ENCODE measurements at regions of chr2 and their contacts with region 1.

Region 1: GRCh38 chr2:74482801-74483674 is at the starts of genes CCDC142 and TTC31:
- DNase-seq: peak; percentile 96
- H3K4me3 Mint-ChIP-seq: peak within 1 kb of the TSS; percentile 100
- H3K27ac Mint-ChIP-seq: peak within 1 kb of the TSS; percentile 99
- H3K4me1 Mint-ChIP-seq: peaks cover 35% of the 10 kb centered on the region
- H3K27me3 Mint-ChIP-seq: no peaks in the 10 kb centered on the region
- total RNA-seq, gene CCDC142: 10.1 to 10.8 TPM
- total RNA-seq, gene TTC31: 27.3 to 29.1 TPM

Region 2: GRCh38 chr2:74334931-74335333 is 148.1 kb before region 1 on chr2:
- CTCF ChIA-PET with region 1: no interaction called
- POLR2A ChIA-PET with region 1: no interaction called
- intact Hi-C with region 1: no loop called
- DNase-seq: peak; percentile 81
- H3K4me3 Mint-ChIP-seq: no peak overlapping the region
- H3K27ac Mint-ChIP-seq: no peak overlapping the region
- H3K4me1 Mint-ChIP-seq: peaks cover 5% of the 10 kb centered on the region
- H3K27me3 Mint-ChIP-seq: no peaks in the 10 kb centered on the region

Region 3: DNA sequence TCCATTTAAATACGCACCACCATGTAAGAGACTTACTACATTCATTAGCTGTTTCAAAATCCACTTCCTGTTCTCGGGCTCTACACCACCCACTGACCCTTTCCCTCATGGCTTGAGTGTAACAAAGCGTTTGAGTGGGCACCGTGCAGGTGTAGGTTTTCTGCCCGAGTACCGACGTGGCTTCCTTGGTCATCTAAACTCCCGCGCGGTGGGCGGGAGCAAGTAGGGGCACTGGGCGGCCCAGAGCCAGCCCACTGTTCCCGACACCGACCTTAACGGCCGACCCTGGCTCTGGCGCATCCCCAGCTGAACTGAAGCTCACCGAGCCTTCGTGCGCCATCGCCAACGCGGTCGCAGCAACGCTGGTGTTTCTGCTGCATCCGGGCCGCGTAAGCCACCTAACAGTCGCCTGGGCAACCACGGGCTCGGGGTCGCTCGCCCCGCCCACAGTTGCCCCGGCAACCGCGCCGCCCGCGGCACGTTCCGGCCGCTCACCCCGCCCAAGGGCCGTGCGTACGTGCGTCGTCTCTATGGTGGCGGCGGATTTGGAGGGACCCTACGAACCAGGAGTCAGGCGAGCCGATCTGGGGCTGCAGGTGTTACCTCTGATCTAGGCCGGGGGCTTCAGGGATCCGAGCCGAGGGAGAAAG is 61.7 kb before region 1 on chr2 and contains the starts of genes C2orf81 and WDR54:
- CTCF ChIA-PET with region 1: interaction called, 7 read pairs
- POLR2A ChIA-PET with region 1: no interaction called
- intact Hi-C with region 1: loop called (anchors 1 kb)
- DNase-seq: peak; percentile 96
- H3K4me3 Mint-ChIP-seq: peak within 1 kb of the TSS; percentile 95
- H3K27ac Mint-ChIP-seq: peak within 1 kb of the TSS; percentile 92
- H3K4me1 Mint-ChIP-seq: peaks cover 21% of the 10 kb centered on the region
- H3K27me3 Mint-ChIP-seq: no peaks in the 10 kb centered on the region
- total RNA-seq, gene C2orf81: 2.4 to 2.8 TPM
- total RNA-seq, gene WDR54: 101 TPM

Region 4: DNA sequence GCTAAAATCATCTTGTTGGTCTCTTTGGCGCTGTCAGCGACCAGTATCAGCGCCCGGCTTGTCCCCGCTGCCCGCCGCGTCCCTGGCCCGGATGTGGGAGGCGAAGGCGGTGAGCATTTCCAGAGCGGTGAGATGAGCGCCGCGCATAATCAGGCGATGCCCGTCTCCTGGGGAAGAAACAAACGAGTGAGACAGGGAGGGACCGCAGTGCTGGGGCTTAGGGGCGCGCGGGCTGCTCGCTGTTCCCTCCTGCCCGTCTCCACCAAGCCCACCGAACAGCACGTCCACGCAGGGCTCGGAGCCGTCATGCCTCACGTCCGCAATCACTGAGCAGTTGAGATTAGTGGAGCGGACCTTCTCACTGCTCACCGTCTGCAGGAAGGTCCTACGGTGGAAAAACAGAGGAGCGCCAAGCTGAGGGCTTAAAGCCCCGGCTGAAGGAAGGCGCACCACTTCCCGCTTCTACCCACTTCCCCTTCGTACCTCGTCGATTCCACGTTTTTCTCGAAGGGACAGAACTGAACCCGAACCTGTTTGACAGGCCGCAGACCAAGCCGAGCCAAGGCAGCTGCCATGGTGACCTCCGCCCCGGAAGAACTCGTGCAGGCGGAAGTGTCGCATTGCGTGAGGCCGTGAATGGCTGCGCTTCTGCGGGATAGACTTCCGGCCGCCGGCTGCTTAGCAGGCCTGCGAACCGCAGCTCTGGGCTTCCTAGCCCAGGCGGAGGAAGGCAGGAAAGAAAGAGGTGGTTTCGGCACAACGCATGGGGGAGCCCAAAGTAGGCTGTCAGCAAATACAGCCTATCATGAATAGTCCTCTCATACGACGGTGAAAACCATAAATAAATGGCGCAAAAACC is 10.7 kb before region 1 on chr2 and contains the start of gene MRPL53:
- CTCF ChIA-PET with region 1: interaction called, 47 read pairs
- POLR2A ChIA-PET with region 1: interaction called, 23 read pairs
- intact Hi-C with region 1: loop called (anchors 1 kb)
- DNase-seq: peak; percentile 96
- H3K4me3 Mint-ChIP-seq: peak within 1 kb of the TSS; percentile 96
- H3K27ac Mint-ChIP-seq: peak within 1 kb of the TSS; percentile 96
- H3K4me1 Mint-ChIP-seq: peaks cover 19% of the 10 kb centered on the region
- H3K27me3 Mint-ChIP-seq: no peaks in the 10 kb centered on the region
- total RNA-seq, gene MRPL53: 117 to 121 TPM

Region 5: DNA sequence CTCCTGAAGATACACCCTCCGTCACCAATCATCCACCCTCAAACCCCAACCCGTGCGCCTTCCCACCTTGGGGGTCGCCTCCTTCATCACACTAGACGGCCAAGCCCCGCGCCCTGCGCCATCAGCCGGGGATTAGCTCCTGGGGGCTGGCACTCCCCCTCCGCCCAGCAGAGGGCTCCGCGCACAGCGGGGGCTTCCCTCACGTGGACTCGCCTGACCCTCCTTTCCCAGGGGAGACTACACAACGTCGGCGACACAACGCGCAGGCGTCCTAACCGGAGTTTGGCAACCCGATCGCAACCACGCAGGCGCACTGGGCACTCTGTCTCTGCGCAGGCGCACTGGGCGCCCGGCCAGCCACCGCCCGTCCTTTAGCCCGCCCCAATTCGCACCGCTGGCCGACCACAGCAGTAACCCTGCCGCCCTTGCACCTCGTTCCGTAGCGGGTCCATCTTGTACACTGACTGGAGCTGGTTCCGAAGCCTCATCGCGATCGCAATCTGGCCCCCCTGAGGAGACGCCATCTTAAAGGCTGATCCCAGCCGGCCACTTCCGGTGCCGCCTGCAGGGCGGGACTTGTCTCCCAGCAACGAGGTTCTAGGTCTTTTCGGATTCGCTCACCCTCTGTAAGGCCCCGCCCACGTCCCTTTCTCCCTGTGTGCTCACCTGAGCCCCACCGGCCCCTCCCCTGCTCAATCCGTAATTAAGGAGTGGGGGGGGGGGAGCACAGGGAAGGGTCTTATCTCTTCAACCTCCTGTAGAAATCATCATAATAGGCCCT is 24.3 kb after region 1 on chr2 and contains the start of gene PCGF1:
- CTCF ChIA-PET with region 1: interaction called, 7 read pairs
- POLR2A ChIA-PET with region 1: interaction called, 3 read pairs
- intact Hi-C with region 1: loop called (anchors 1 kb)
- DNase-seq: peak; percentile 99
- H3K4me3 Mint-ChIP-seq: peak within 1 kb of the TSS; percentile 91
- H3K27ac Mint-ChIP-seq: peak within 1 kb of the TSS; percentile 98
- H3K4me1 Mint-ChIP-seq: peaks cover 48% of the 10 kb centered on the region
- H3K27me3 Mint-ChIP-seq: peaks cover 33% of the 10 kb centered on the region
- total RNA-seq, gene PCGF1: 22.6 to 26.0 TPM

Region 6: DNA sequence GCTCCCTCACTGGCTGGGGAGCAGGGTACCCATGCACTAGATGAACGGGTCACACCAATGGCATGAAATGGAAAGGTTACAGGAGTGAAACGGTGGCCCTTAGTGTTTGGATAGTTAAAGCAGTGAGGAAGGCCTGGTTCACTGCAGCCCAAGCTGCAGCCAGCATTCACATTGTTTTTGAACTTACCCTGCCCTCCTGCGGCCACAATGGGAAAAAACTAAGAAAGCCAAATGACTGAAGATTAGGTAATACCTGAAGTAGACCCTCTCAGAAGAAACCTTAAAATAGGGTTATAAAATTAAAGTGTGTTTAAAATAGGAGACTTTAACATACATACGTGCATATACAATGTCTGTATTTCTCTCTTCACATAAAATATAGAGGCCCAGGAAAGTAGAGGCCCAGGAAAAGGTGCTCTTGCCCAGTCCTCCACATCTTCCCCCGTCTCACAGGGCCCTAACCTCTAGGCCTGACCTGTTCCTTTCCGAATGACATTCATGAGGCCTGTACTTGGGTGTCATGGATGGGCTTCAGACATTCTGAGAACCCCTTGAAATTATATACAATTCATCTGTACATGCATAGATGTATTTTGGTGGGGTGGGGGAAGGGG is 104.7 kb after region 1 on chr2:
- CTCF ChIA-PET with region 1: interaction called, 145 read pairs
- POLR2A ChIA-PET with region 1: interaction called, 7 read pairs
- intact Hi-C with region 1: loop called (anchors 1 kb)
- DNase-seq: peak; percentile 75
- H3K4me3 Mint-ChIP-seq: no peak overlapping the region
- H3K27ac Mint-ChIP-seq: no peak overlapping the region
- H3K4me1 Mint-ChIP-seq: peaks cover 27% of the 10 kb centered on the region
- H3K27me3 Mint-ChIP-seq: peaks cover under 1% of the 10 kb centered on the region